ENCODE measurements at regions of chr1 and their contacts with region 1.

Region 1: GRCh38 chr1:154324669-154325582 is at the start of gene ATP8B2:
- DNase-seq: peak; percentile 88
- ATAC-seq: peak; percentile 56
- H3K4me3 Mint-ChIP-seq: peak within 1 kb of the TSS; percentile 90
- H3K27ac Mint-ChIP-seq: peak within 1 kb of the TSS; percentile 90
- H3K4me1 Mint-ChIP-seq: peaks cover 39% of the 10 kb centered on the region
- H3K27me3 Mint-ChIP-seq: peaks cover 17% of the 10 kb centered on the region
- total RNA-seq, gene ATP8B2: 46.3 to 67.3 TPM

Region 2: DNA sequence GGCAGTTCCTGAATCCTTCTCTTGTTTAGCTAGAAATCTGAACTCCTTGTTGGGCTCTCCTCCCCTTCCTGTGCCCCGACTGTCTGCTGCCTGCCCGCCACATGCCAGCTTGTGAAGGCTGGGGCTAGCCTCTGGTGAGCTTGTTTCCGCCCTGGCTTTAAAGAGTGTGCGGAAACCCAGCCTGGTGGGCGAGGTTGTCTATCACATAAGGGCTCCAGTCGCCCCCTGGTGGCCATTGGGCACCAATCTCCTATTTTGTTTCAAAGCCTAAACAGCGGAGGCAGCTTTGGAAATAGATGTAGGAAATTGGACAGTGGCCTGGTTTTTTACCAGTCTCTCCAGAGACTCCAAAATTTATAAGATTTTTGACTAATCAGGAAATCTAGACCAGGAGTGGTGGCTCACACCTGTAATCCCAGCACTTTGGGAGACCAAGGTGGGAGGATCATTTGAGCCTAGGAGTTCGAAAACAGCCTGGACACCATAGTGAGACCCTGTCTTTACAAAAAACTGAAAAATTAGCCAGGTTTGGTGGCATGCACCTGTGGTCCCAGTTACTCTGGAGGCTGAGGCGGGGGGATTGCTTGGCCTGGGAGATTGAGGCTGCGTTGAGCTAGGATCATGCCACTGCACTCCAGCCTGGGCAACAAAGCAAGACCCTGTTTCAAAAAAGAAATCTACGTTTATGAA is 10.2 kb after region 1 on chr1:
- CTCF ChIA-PET with region 1: interaction called, 292 read pairs
- DNase-seq: peak; percentile 95
- ATAC-seq: peak; percentile 90
- H3K4me3 Mint-ChIP-seq: peak overlapping the region; percentile 12
- H3K27ac Mint-ChIP-seq: peak overlapping the region; percentile 78
- H3K4me1 Mint-ChIP-seq: peaks cover 57% of the 10 kb centered on the region
- H3K27me3 Mint-ChIP-seq: no peaks in the 10 kb centered on the region

Region 3: DNA sequence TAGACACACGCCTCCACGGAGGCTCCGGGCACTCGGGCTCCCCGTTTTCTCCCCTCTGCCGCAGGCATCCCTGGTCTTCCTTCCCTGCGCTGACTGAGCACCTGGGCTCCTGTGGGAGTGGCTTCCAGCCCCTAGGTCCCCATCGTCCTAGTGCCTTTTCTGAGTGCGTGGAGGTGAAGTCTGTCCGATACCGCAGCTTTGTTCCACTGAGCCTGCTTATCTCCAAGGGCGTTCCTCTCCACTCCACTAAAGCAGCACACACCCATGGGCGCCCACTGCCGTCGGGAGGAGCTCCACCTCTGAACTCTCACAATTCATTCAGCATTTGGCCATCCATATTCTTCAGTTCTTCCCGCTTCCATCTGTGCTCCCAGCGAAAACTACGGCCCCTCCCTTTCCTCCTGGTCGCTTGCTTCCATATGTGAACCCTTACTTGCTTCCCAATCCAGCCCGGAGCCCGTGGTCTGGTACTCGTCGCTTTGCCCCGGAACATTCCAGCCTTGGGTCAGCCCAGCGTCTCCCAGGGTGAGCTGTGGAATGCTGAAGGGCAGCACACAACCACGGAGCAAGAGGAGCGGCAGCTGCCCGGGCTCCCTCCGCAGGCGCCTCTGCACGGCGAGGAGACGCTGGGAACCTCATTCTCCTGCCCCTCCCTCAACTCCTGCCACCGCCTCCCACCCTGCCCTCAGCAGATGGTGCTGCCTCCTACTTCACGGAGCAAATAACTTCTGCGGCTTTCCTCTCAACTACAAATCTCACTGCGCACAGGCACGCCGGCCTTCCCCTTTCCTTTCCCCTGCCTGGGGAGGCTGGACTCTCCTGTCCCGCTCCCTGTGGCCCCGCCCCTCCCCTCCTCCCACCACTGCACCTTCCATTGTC is 27.9 kb after region 1 on chr1:
- CTCF ChIA-PET with region 1: interaction called, 292 read pairs
- DNase-seq: no peak
- ATAC-seq: peak; percentile 66
- H3K4me3 Mint-ChIP-seq: peak overlapping the region; percentile 62
- H3K27ac Mint-ChIP-seq: no peak overlapping the region
- H3K4me1 Mint-ChIP-seq: peaks cover 22% of the 10 kb centered on the region
- H3K27me3 Mint-ChIP-seq: peaks cover 19% of the 10 kb centered on the region